Activated CD4-positive, alpha-beta T cell treated with anti-CD3 and anti-CD28 coated beads for 36 hours (primary cell): ENCODE measurements at regions of chr11 and their contacts with region 1.

Region 1: DNA sequence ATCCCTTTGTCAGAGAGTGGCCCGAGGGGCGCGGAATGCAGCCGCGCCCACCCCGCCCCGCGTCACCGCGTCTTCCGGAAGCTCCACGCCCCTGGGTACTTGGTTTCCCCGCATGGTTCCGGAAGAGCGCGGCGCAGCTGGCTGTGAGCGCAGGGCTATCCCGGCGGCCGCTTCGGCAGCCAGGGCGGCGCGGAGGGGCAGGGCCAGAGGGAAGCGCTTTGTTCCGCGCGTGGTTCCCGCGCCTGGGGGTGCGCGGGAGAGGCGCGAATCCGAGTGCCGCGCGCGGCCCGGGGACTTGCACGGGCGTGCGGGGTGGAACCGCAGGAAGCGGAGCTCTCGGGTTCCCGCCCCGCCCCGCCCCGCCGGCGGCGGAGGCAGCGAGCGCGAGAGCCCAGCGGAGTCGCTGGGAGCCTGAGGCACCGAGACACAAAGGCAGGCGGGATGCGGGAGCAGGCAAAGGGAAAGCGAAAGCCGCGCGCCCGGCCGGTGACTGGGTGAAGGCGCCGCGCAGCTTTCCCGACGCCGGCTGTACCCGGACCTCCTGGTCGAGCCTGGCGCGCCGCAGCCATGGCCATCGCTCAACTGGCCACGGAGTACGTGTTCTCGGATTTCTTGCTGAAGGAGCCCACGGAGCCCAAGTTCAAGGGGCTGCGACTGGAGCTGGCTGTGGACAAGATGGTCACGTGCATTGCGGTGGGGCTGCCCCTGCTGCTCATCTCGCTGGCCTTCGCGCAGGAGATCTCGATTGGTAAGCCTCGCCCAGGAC is at the start of gene PANX1:
- DNase-seq: peak; percentile 84
- ATAC-seq: peak; percentile 81
- H3K4me3 Mint-ChIP-seq: no peak within 1 kb of the TSS
- H3K27ac Mint-ChIP-seq: peak within 1 kb of the TSS; percentile 90
- H3K4me1 Mint-ChIP-seq: peaks cover 23% of the 10 kb centered on the region
- H3K27me3 Mint-ChIP-seq: no peaks in the 10 kb centered on the region
- total RNA-seq, gene PANX1: 9.8 to 10.7 TPM

Region 2: DNA sequence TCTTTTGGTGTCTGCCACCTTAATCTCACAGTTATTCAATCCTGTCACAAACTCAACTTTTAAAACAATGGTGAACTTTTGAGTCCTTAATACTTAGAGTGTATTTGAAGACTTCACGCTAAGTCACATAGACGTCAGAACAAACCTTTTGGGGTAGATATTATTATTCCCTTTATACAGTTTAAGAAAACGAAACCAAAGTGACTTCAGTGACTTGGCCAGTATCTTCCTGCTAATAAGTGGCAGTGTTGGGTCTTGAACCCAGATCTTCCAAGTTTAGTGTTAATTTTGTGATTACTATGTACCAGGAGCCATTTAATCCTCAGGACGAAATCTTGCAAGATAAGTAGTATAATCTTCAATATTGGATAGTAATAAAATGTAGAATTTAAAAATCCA is 466.8 kb before region 1 on chr11:
- CTCF ChIA-PET with region 1: no interaction called
- POLR2A ChIA-PET with region 1: no interaction called
- intact Hi-C with region 1: loop called in 1 of 2 experiments (anchors 2 kb)
- DNase-seq: no peak
- ATAC-seq: no peak
- H3K4me3 Mint-ChIP-seq: peak overlapping the region; percentile 94
- H3K27ac Mint-ChIP-seq: peak overlapping the region; percentile 95
- H3K4me1 Mint-ChIP-seq: peaks cover 44% of the 10 kb centered on the region
- H3K27me3 Mint-ChIP-seq: no peaks in the 10 kb centered on the region

Region 3: DNA sequence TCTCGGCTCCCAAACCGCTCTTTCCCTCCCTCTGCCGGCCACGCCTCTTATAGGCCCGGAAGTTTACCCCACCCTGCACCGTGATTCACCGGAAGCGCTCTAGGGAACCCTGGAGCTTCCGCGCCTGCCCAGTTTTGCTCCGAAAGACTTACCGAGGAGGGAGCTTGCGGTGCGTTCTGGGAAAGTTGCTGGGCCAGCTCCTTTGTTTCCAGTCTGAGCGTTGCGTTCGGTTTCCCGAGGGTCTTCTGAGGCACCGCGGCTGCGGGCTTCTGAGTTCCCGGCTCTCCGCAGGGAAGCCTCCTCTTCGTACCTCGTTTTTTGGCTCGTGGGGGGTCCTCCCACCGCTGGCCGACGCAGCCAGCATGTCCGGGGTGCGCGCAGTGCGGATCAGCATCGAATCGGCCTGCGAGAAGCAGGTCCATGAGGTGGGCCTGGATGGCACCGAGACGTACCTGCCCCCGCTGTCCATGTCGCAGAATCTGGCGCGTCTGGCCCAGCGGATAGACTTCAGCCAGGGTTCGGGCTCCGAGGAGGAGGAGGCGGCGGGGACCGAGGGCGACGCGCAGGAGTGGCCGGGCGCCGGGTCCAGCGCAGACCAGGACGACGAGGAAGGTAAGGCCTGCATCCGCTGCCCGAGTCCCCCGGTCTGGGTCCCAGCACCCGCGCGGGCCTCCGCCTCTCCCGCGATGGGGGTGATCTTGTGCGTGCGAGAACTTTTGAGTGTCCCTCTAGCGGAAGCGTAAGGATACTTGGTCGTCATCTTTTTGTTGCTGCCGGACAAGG is 344.6 kb before region 1 on chr11 and contains the start of gene MED17:
- CTCF ChIA-PET with region 1: no interaction called
- POLR2A ChIA-PET with region 1: interaction called, 8 read pairs
- intact Hi-C with region 1: loop called (anchors 1 to 5 kb)
- DNase-seq: peak; percentile 95
- ATAC-seq: peak; percentile 97
- H3K4me3 Mint-ChIP-seq: peak within 1 kb of the TSS; percentile 89
- H3K27ac Mint-ChIP-seq: peak within 1 kb of the TSS; percentile 99
- H3K4me1 Mint-ChIP-seq: peaks cover 42% of the 10 kb centered on the region
- H3K27me3 Mint-ChIP-seq: no peaks in the 10 kb centered on the region
- total RNA-seq, gene MED17: 28.6 to 29.9 TPM

Region 4: GRCh38 chr11:94219771-94220170 is 90.8 kb after region 1 on chr11:
- CTCF ChIA-PET with region 1: no interaction called
- POLR2A ChIA-PET with region 1: no interaction called
- intact Hi-C with region 1: no loop called
- DNase-seq: no peak
- ATAC-seq: no peak
- H3K4me3 Mint-ChIP-seq: no peak overlapping the region
- H3K27ac Mint-ChIP-seq: no peak overlapping the region
- H3K4me1 Mint-ChIP-seq: no peaks in the 10 kb centered on the region
- H3K27me3 Mint-ChIP-seq: no peaks in the 10 kb centered on the region

Region 5: GRCh38 chr11:94281324-94281723 is 152.4 kb after region 1 on chr11:
- CTCF ChIA-PET with region 1: no interaction called
- POLR2A ChIA-PET with region 1: no interaction called
- intact Hi-C with region 1: no loop called
- DNase-seq: no peak
- ATAC-seq: no peak
- H3K4me3 Mint-ChIP-seq: no peak overlapping the region
- H3K27ac Mint-ChIP-seq: no peak overlapping the region
- H3K4me1 Mint-ChIP-seq: no peaks in the 10 kb centered on the region
- H3K27me3 Mint-ChIP-seq: no peaks in the 10 kb centered on the region

Region 6: GRCh38 chr11:94493281-94494125 is 364.6 kb after region 1 on chr11 and contains the starts of genes ANKRD49 and MRE11:
- CTCF ChIA-PET with region 1: no interaction called
- POLR2A ChIA-PET with region 1: no interaction called
- intact Hi-C with region 1: loop called (anchors 1 to 2 kb)
- DNase-seq: peak; percentile 97
- ATAC-seq: peak; percentile 100
- H3K4me3 Mint-ChIP-seq: peak within 1 kb of the TSS; percentile 94
- H3K27ac Mint-ChIP-seq: peak within 1 kb of the TSS; percentile 97
- H3K4me1 Mint-ChIP-seq: peaks cover 24% of the 10 kb centered on the region
- H3K27me3 Mint-ChIP-seq: no peaks in the 10 kb centered on the region
- total RNA-seq, gene ANKRD49: 20.8 to 22.4 TPM
- total RNA-seq, gene MRE11: 36.8 to 51.3 TPM

Region 7: GRCh38 chr11:94973099-94973968 is 844.4 kb after region 1 on chr11 and contains the starts of genes CWC15 and KDM4D:
- CTCF ChIA-PET with region 1: no interaction called
- POLR2A ChIA-PET with region 1: interaction called, 3 read pairs
- intact Hi-C with region 1: loop called in 1 of 2 experiments (anchors 1 kb)
- DNase-seq: peak; percentile 97
- ATAC-seq: peak; percentile 99
- H3K4me3 Mint-ChIP-seq: peak within 1 kb of the TSS; percentile 84
- H3K27ac Mint-ChIP-seq: peak within 1 kb of the TSS; percentile 94
- H3K4me1 Mint-ChIP-seq: peaks cover 27% of the 10 kb centered on the region
- H3K27me3 Mint-ChIP-seq: no peaks in the 10 kb centered on the region
- total RNA-seq, gene CWC15: 74.7 to 85.0 TPM
- total RNA-seq, gene KDM4D: 1.5 to 1.8 TPM

Region 8: DNA sequence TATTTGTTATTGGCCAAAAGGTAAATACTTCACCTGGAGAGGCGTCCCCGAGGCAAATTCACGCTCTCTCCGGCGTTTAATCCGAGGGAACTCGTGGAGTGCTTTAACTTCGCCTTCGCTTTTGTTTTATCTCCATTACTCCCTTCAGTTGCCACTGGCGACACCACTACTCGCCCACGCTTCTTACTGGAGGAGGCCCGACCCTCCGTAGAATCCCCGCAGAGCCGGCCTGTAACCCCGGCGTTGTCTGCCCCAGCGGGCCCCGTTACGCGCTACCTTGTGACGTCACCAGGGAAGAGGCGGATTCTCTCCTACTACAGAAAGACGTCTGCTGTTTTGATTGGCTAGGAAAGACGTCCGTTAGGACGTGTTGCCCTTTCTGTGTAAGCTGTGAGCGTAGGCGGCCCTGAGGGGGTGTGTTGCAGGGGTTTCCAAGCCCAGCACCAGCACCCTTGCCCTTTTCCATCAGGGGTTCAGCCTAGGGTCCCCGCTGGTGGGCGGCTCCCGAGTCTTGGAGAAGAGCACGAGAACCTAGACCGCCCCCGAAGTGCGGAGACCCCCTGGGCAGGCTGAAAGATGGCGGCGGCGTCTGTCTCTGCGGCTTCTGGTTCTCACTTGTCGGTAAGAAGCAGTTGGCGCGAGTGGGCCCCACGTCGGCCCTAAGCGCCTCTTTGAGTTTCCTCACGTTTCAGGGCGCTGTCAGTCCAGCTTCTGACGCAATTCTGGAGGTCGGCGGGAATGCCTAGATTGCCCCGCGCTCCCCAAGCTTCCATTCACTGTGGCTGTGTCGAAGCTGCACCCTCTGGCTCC is 1661.4 kb after region 1 on chr11 and contains the start of gene CEP57:
- CTCF ChIA-PET with region 1: no interaction called
- POLR2A ChIA-PET with region 1: no interaction called
- intact Hi-C with region 1: loop called in 1 of 2 experiments (anchors 2 kb)
- DNase-seq: peak; percentile 98
- ATAC-seq: peak; percentile 67
- H3K4me3 Mint-ChIP-seq: peak within 1 kb of the TSS; percentile 99
- H3K27ac Mint-ChIP-seq: peak within 1 kb of the TSS; percentile 100
- H3K4me1 Mint-ChIP-seq: peaks cover 53% of the 10 kb centered on the region
- H3K27me3 Mint-ChIP-seq: no peaks in the 10 kb centered on the region
- total RNA-seq, gene CEP57: 101 to 134 TPM